Activated naive CD4-positive, alpha-beta T cell treated with anti-CD3 and anti-CD28 coated beads for 36 hours (primary cell): ENCODE measurements at regions of chr20 and their contacts with region 1.

Region 1: DNA sequence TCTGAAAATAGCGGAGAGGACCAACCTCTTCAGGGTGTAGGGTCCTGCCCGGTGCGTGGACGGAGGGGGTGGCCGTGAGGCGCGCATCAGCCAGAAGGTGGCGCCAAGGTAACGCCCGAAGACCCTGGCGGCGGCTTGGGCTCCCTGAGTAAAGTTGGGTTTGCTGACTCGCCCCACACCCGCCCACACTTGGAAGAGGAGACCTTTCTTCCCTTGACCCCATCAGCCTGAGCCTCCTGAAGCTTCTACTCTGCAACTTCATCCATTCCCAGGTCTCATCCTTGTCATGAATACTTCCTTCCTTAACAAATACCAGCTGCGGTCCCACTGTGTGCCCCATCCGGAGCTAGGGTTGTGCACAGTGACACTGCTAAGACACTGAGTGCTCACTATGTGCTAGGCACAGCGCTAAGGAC is 14.6 kb downstream of the CD40 start:
- DNase-seq: peak; percentile 69
- H3K4me3 Mint-ChIP-seq: no peak overlapping the region
- H3K27ac Mint-ChIP-seq: no peak overlapping the region
- H3K4me1 Mint-ChIP-seq: peaks cover 3% of the 10 kb centered on the region
- H3K27me3 Mint-ChIP-seq: peaks cover 31% of the 10 kb centered on the region

Region 2: DNA sequence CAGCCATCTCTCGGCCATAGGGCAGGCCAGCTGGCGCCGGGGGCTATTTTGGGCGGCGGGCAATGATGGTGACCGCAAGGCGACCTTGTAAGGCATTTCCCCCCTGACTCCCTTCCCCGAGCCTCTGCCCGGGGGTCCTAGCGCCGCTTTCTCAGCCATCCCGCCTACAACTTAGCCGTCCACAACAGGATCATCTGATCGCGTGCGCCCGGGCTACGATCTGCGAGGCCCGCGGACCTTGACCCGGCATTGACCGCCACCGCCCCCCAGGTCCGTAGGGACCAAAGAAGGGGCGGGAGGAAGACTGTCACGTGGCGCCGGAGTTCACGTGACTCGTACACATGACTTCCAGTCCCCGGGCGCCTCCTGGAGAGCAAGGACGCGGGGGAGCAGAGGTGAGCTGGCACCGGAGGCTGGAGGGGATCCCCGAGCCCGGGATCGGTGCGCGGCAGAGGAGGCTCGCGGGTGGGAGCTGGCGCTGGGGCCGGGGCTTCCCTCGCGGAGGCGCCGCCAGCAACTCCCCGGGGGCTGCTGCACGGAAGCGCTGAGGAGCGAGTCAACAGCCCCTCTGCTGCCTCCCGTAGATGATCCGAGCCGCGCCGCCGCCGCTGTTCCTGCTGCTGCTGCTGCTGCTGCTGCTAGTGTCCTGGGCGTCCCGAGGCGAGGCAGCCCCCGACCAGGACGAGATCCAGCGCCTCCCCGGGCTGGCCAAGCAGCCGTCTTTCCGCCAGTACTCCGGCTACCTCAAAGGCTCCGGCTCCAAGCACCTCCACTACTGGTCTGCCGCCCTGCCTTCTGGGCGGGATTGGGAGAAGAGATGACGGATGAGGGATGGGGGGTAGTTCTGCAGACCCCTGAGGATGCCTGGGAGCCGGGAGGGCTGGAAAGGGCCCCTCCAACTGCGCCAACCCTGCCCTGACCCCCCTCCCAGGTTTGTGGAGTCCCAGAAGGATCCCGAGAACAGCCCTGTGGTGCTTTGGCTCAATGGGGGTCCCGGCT is 241.4 kb before region 1 on chr20 and contains the starts of genes CTSA and NEURL2:
- CTCF ChIA-PET with region 1: no interaction called
- intact Hi-C with region 1: no loop called
- DNase-seq: peak; percentile 91
- H3K4me3 Mint-ChIP-seq: peak within 1 kb of the TSS; percentile 89
- H3K27ac Mint-ChIP-seq: peak within 1 kb of the TSS; percentile 84
- H3K4me1 Mint-ChIP-seq: peaks cover 22% of the 10 kb centered on the region
- H3K27me3 Mint-ChIP-seq: no peaks in the 10 kb centered on the region
- total RNA-seq, gene CTSA: 28.7 to 31.5 TPM
- total RNA-seq, gene NEURL2: 0.99 to 1.4 TPM

Region 3: GRCh38 chr20:46174469-46175128 is 41.9 kb after region 1 on chr20:
- CTCF ChIA-PET with region 1: interaction called, 9 read pairs
- intact Hi-C with region 1: loop called (anchors 1 kb)
- DNase-seq: peak; percentile 80
- H3K4me3 Mint-ChIP-seq: no peak overlapping the region
- H3K27ac Mint-ChIP-seq: no peak overlapping the region
- H3K4me1 Mint-ChIP-seq: no peaks in the 10 kb centered on the region
- H3K27me3 Mint-ChIP-seq: peaks cover 44% of the 10 kb centered on the region

Region 4: DNA sequence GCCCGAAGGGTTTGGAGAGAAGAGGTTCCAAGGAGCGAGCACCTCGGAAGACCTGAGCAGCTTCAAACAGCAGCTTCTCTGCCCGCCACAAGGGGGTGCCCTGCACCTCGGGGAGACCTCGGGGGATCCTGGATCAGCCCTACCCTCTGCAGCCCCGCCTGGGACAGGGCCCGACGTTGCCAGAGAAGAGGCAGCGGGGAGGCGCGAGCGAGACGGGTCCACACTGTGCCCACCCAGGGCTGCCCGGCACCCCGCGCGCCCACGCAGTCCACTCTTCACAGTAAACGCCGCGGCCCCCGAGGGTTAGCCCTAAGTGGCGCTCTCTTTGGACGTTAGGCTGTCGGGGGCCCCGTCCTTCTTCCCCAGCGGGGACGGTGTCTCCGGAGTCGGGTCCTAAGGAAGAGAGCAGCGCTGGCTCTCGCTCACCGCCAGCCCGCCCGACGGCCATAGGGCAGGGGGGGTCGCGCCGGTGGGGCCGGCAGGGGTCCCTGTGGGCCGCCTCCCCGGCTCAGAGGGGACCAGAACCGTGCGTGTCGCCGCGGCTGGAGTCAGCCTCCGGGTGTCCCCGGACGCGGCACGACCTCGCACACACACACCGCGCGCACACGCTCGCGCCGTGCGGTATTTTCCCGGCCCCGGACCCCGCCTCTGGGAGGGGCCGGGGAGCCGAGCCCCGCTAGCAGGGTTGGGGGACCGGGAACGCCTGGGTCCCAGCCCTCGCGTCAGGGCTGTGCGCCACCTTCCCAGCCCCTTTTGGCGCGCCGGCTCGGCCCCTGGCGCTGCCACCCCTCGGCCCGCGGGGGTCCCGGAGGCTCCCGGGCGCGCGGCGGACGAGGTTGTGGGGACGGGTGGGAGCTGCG is 174.7 kb after region 1 on chr20:
- CTCF ChIA-PET with region 1: interaction called, 5 read pairs
- intact Hi-C with region 1: loop called (anchors 2 kb)
- DNase-seq: peak; percentile 81
- H3K4me3 Mint-ChIP-seq: peak overlapping the region; percentile 25
- H3K27ac Mint-ChIP-seq: no peak overlapping the region
- H3K4me1 Mint-ChIP-seq: peaks cover 7% of the 10 kb centered on the region
- H3K27me3 Mint-ChIP-seq: peaks cover 57% of the 10 kb centered on the region

Region 5: DNA sequence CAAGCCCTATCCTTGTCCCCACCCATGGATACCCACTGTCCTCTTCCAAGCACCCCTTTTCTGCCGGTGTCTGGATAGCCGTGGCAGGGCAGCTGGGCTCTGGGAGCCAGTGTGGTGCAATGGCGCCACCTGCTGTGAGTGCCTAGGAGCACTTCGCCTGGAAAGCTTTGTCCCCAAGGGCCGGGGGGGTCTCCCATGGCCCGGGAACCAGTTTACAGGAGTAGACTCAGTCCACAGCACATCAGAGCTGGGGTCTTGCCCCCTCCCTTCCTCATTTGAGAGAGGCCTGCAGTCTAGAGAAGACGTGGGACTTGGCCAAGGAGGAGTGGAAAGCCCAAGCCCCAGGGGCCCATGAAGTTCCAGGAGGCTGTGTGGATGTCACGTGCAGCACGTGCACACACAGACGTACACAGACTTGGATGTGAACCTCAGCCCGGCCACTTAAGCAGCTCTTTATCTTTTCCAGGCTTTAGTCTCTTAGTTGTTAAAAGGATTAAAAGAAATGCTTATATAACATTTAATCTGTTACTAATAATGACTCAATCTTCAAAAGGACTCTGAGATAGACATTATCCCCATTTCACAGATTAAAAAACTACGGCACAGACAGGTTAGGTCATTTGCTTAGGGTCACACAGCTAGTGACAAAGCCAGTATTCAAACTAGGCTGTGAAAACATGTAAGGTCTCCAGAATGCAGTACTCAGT is 216.5 kb after region 1 on chr20:
- CTCF ChIA-PET with region 1: interaction called, 4 read pairs
- intact Hi-C with region 1: loop called (anchors 2 kb)
- DNase-seq: peak; percentile 67
- H3K4me3 Mint-ChIP-seq: no peak overlapping the region
- H3K27ac Mint-ChIP-seq: no peak overlapping the region
- H3K4me1 Mint-ChIP-seq: peaks cover 16% of the 10 kb centered on the region
- H3K27me3 Mint-ChIP-seq: no peaks in the 10 kb centered on the region

Region 6: DNA sequence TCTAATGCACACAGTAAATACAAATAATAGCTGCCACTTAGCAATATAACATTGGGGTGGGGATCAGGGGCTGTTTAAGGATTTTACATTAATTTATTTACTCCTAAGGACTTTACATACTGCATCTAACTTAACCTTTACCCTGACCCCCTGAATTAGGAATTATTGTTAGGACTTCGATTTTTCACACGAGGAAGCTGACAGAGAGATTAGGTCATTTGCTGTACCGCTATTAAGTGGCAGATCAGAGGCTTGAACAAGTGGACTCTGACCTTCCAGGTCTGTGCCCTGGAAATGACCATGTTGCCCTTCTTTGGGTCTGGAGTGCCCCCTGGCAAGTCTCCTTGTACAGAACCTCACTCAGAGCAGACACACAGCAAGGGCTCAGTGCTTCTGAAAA is 278.9 kb after region 1 on chr20:
- CTCF ChIA-PET with region 1: no interaction called
- intact Hi-C with region 1: loop called (anchors 1 kb)
- DNase-seq: no peak
- H3K4me3 Mint-ChIP-seq: no peak overlapping the region
- H3K27ac Mint-ChIP-seq: no peak overlapping the region
- H3K4me1 Mint-ChIP-seq: peaks cover 19% of the 10 kb centered on the region
- H3K27me3 Mint-ChIP-seq: peaks cover 5% of the 10 kb centered on the region

Region 7: DNA sequence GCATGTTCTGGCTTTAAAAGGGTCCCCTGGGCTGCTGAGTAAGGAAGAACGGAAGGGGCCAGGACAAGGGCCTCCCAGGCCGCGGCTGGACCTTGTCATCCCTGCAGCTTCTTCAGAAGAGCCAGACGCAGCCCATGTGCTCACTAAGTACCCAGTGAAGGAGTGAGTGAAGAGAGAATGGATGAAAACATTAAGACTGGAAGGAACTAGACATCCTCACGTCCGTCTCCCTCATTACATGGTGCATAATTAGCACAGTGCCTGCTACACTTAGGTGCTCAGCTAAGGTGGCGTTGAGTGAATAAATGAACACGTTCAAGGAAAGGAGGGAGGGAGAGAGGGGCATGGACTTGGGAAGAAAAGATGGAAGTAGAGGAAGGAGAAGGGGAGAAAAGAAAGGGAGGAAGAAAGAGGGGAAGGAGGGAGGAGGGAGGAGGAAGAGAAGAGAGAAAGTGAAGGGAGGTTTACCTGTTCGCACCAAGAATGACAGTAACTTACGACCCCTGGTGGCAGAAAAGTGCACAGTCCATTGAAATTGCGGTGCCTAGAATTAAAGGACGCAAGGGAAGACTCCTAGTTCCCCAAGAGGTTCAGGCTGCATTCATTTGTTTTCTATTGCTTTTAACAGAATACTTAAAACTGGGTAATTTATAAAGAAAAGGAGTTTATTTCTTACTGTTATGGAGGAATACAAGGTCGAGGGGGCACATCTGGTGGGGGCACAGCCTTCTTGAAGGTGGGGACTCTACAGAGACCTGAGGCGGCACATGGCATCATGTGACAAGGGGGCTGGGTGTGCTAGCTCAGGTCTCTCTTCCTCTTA is 548.5 kb after region 1 on chr20:
- CTCF ChIA-PET with region 1: no interaction called
- intact Hi-C with region 1: loop called (anchors 5 kb)
- DNase-seq: peak; percentile 86
- H3K4me3 Mint-ChIP-seq: no peak overlapping the region
- H3K27ac Mint-ChIP-seq: no peak overlapping the region
- H3K4me1 Mint-ChIP-seq: peaks cover 28% of the 10 kb centered on the region
- H3K27me3 Mint-ChIP-seq: no peaks in the 10 kb centered on the region